Cardiac septum (tissue), 1 donor: ENCODE measurements at regions of chr1 and their contacts with region 1.

Region 1: GRCh38 chr1:152047730-152048402 is 11.1 kb upstream of the S100A11 start:
- DNase-seq: peak; percentile 96

Region 2: GRCh38 chr1:152034646-152035405 is 13.0 kb before region 1 on chr1:
- intact Hi-C with region 1: loop called (anchors 1 kb)
- DNase-seq: no peak

Region 3: DNA sequence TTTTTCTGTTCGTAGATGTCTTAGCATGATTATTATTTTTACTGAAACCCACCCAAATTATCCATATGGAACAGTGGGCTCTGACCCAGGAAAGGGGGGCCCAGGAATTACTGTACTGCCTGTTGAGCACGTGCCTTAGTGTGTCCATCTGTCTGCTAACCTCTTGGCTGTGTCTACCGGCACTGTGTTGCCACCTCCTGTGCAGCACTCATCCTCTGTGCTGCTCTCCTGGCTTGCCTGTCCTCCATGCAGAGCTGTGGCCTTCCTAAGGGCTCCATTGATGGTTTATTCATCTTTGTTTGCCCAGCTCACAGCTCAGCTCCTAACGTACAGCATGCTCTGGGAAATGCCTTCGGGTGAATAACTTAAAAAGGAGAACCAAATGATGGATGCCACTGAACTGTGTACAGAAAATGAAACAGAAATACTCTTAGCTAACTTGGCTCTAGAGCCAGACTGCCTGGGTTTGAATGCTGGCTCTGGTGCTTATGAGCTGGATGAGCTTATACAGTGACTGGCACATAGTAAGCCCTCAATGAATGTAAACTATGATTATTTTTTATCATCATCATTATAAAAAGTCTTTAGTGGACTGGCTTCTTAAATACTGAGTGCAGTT is 122.5 kb after region 1 on chr1:
- intact Hi-C with region 1: no loop called
- DNase-seq: no peak

Region 4: DNA sequence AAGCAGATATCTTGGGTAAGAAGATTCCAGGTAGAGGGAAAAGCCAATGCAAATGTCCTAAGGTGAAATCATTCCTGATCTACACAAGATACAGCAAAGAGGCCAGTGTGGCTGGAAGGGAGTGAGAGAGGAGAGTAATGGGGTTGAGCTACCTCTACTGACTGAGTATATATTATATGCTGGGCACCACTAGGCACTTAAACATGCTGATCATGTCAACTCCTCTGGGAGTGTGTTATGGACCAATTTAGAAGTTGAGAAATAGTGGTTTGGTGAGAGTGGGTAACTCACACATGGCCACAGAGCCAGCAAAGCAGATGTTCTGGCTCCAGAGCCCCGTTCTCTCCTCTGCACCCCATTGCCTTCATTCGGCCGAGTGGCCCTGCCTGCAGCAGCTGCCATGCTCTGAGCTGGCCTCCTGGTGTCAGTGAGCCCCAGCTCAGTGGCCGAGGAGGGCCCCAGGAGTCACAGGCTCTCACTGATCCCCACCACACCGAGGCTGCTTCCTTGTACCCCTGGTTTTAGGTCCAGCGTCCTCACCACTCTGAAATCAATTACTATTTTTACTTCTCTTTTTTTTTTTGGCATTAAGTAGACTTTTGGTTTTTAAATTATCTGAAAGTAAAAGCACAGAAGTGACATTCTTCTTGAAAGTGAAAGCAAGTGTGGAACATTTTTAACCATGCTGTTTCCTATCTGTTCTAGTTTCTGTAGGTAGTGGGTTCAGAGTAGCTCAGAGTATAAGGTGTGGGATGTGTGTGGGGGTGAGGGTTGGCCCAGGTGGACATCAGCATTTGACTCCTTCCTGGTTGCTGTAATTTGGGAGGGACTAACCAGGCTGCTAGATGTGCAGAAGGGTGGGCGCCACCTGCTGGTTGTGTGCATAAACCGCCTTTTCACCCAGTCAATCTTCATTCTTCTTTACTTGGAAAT is 412.0 kb after region 1 on chr1:
- intact Hi-C with region 1: loop called (anchors 2 kb)
- DNase-seq: no peak